ENCODE measurements at regions of chr1 and their contacts with region 1.

Region 1: DNA sequence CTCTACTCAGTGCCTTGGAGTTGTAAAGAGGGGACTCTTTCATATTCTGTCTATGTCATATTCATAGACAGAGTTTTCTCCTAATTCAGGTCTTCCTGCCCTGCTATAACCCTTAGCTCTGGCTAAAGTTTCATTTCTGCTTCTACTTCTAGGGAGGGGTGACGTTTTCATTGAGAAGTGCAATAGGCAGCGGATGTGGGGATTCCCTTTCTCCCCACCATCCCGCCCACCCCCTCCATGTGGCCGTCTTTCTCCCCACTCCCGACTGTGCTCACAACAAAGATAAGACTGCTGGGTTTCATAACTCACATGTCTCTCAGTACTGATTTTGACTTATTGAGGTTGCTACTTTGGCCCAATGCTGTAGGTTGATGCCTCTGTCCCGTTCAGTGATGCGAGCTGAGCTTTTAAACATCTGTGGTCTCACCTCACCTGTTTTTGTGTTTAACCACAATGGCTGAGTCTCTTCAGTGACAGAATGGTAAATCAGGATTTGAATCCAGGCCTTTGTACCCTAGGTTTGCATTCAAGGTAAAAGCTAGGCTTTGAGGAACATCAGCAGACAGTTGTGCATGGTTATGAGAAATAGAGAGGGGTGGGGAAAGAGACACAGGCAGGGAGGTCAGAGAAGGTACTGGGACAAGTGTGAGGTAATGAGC is 7.8 kb upstream of the KIF14 start:
- DNase-seq: peak; percentile 75
- CTCF ChIP-seq: no peak

Region 2: DNA sequence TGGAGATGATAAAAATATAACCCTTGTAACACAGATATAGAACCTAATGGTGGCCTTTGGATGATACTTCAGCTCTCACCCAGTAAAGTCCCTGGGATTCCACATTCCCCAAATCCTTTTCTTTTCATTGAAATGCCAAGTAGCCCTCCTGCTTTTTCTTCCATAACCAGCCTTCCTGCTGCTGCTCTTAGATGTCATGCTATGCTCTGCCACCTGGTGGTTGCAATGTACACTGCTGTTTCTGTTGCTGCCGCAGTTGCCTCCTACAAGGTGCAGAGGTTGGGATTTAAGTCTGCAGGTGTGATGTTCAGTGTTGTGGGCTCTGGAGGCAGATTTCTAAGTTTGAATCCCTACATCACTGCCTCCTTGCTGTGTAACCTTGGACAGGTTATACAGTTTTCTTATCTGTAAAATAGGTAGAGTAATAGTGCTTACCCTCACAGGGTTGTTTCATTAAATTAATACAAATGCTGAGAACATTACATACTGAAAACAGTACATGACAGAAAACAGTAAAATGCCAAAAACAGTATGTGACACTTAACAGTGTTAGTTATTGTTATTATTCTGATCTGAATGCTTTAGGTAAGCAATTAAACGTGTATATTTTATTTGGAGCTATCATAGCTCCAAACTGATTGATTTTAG is 174.6 kb after region 1 on chr1:
- CTCF ChIA-PET with region 1: interaction called, 76 read pairs
- POLR2A ChIA-PET with region 1: no interaction called
- DNase-seq: peak; percentile 58
- CTCF ChIP-seq: peak; percentile 97

Measured in GM10248 (cell line).